ENCODE measurements at regions of chr18 and their contacts with region 1.

Region 1: DNA sequence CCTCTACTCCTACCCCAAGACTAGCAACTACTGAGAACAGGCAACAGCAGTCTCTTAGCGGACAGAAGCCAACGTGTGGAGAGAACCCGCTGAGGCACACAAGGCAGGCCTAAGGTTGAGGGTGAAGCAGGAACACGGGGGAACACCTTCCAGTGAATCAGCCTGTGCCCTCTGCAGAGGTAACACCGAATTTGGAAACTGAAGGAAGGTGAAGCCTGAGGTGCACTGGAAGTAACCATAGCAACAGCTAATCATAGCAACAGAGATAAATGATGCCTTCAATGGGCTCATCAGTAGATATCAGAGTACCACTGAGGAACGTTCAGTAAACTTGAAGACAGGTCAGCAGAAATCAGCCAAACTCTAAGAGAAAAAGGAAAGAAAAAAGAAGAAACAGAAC is 43.3 kb downstream of the OSBPL1A start:
- DNase-seq: no peak

Region 2: DNA sequence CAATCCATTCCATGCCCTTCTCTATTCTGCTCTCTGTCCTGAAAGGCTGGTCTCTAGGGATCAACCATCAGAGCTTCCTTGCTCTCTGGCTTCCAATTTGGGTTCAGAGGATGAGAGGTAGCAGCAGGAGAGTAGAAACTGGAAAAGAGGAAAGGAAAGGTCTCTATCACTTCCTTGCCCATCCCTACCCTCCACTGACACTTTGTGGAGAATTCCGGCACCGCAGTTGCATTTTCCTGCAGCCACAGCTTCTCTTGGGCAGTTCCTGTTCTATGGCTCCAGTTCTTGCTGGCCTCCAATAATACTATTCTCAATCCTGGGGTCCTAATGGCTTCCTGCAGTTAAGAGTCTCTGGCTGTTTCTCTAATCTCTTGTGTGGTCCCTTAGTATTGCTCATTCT is 58.9 kb after region 1 on chr18:
- intact Hi-C with region 1: loop called in 1 of 2 experiments (anchors 10 kb)
- DNase-seq: no peak

Region 3: GRCh38 chr18:24837066-24837465 is 482.8 kb after region 1 on chr18:
- intact Hi-C with region 1: loop called in 1 of 2 experiments (anchors 10 kb)
- DNase-seq: no peak

Measured in posterior vena cava (tissue), 2 donors.